ENCODE measurements at regions of chr14 and their contacts with region 1.

Region 1: DNA sequence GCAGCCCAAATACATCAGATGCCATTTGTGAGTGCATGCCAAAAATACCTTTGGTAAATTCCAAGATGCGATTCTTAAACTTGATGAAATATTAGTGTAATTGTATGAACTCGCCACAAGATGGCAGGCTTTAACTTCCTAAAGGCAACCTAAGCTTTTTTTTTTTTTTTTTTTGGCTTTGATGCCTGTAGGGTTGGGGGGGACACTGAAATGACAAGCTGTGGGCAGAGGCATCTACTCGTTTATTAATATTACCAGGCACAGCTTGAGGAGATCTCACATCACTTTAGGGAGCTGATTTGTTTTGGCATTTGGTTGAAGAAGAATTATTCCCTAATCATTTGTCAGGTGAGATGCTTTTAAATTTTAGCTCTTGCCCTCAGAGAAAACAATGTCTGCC is 126.7 kb upstream of the CCDC196 start:
- DNase-seq: no peak
- ATAC-seq: no peak
- H3K4me3 ChIP-seq: no peak overlapping the region
- H3K27ac ChIP-seq: no peak overlapping the region
- H3K4me1 ChIP-seq: no peaks in the 10 kb centered on the region
- H3K27me3 ChIP-seq: peaks cover 2% of the 10 kb centered on the region
- CTCF ChIP-seq: peak; percentile 64

Region 2: DNA sequence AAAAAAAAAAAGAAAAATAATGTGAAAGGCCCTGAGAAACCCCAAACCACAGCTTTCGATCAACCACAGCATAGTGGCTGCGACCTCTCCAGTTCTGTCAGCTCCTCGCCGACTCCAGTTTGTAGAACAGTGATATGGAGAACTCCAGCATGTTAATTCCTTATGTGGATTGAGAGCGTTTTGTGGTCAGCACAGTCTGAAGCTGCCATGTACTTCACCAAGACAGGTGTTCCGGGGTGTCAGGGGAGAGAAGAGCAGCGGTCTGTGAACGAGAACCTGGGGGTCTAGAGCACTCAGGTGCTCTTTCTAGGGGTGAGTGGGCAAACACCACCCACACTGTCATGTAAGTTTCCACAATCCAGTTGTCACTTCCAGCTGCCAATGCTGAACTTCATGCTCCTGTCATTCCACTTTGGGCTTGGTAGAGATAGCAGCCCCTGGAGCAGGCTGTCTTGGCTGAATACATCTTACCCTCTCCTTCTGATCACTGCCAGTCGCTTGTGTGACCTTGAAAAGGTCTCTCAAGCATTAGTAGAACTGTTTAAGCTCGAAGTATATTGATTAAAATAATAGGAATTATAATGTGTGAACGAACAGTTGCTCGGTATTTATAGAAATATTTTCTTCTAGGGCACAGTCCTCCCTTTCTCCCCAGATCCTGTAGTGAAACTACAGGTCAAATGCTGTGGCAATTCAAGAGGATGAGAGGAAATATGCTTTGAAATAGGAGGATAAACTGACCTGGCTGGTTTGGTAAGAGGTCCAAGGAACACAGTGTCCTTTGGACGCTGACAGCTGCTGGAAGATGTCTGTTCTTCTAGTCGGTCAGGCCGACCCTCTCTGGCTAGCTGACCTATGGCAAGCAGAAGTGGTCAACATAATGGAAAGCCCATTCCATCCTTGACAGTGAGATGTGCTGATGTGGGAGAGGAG is 1241.5 kb before region 1 on chr14:
- CTCF ChIA-PET with region 1: interaction called, 12 read pairs
- POLR2A ChIA-PET with region 1: no interaction called
- in situ Hi-C with region 1: no loop called
- intact Hi-C with region 1: no loop called
- DNase-seq: no peak
- ATAC-seq: no peak
- H3K4me3 ChIP-seq: no peak overlapping the region
- H3K27ac ChIP-seq: no peak overlapping the region
- H3K4me1 ChIP-seq: no peaks in the 10 kb centered on the region
- H3K27me3 ChIP-seq: no peaks in the 10 kb centered on the region
- CTCF ChIP-seq: no peak

Region 3: DNA sequence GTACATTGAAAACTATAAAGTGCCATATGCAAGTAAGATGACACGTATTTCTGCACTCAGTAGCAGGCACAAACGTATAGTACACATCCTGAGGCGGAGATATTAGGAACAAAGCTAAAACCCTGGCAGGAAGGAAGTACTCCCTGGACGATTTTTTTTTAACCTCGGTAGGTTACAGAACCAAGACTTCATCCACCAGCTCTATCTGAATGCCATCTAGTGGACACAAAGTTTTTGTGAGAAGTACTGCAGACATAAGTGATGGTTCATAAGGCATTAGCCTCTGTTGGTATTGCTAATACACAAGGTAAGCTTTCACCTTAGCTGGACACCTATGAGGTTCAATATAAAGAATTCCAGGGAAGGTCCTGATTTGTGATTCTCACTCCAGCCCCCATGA is 43.7 kb after region 1 on chr14:
- CTCF ChIA-PET with region 1: interaction called, 5 read pairs
- POLR2A ChIA-PET with region 1: no interaction called
- in situ Hi-C with region 1: no loop called
- intact Hi-C with region 1: loop called (anchors 5 kb)
- DNase-seq: peak; percentile 18
- ATAC-seq: peak; percentile 77
- H3K4me3 ChIP-seq: no peak overlapping the region
- H3K27ac ChIP-seq: no peak overlapping the region
- H3K4me1 ChIP-seq: no peaks in the 10 kb centered on the region
- H3K27me3 ChIP-seq: 0 out of 2 replicates have a peak, but pooled peaks cover 4% of the 10 kb centered on the region
- CTCF ChIP-seq: peak; percentile 51

Region 4: GRCh38 chr14:66624299-66624937 is 264.9 kb after region 1 on chr14:
- CTCF ChIA-PET with region 1: interaction called, 10 read pairs
- POLR2A ChIA-PET with region 1: no interaction called
- in situ Hi-C with region 1: no loop called
- intact Hi-C with region 1: no loop called
- DNase-seq: peak; percentile 33
- ATAC-seq: peak; percentile 94
- H3K4me3 ChIP-seq: no peak overlapping the region
- H3K27ac ChIP-seq: no peak overlapping the region; the same call in 1 of the 2 replicates
- H3K4me1 ChIP-seq: 0 out of 2 replicates have a peak, but pooled peaks cover 4% of the 10 kb centered on the region
- H3K27me3 ChIP-seq: no peaks in the 10 kb centered on the region
- CTCF ChIP-seq: peak; percentile 77

Region 5: GRCh38 chr14:67228325-67228984 is 869.0 kb after region 1 on chr14:
- CTCF ChIA-PET with region 1: interaction called, 14 read pairs
- POLR2A ChIA-PET with region 1: no interaction called
- in situ Hi-C with region 1: no loop called
- intact Hi-C with region 1: no loop called
- DNase-seq: no peak
- ATAC-seq: no peak; the same call in 1 of the 2 replicates
- H3K4me3 ChIP-seq: peak overlapping the region in 1 of 2 experiments; percentile 18; a peak in 1 of 4 replicates
- H3K27ac ChIP-seq: peak overlapping the region; percentile 88
- H3K4me1 ChIP-seq: peaks cover 28% of the 10 kb centered on the region
- H3K27me3 ChIP-seq: no peaks in the 10 kb centered on the region
- CTCF ChIP-seq: no peak

Measured in Panc1 (cell line).